ENCODE measurements at regions of chr12 and their contacts with region 1.

Region 1: GRCh38 chr12:120159509-120160237 is 34.8 kb downstream of the GCN1 start:
- DNase-seq: no peak
- ATAC-seq: no peak
- H3K4me3 ChIP-seq: no peak overlapping the region
- H3K27ac ChIP-seq: no peak overlapping the region
- H3K4me1 ChIP-seq: no peaks in the 10 kb centered on the region
- H3K27me3 ChIP-seq: no peaks in the 10 kb centered on the region
- CTCF ChIP-seq: no peak
- EP300 ChIP-seq: no peak
- POLR2A ChIP-seq: no peak
- RAD21 ChIP-seq: no peak

Region 2: GRCh38 chr12:120024193-120024592 is 135.5 kb before region 1 on chr12:
- CTCF ChIA-PET with region 1: no interaction called
- POLR2A ChIA-PET with region 1: no interaction called
- in situ Hi-C with region 1: no loop called
- intact Hi-C with region 1: no loop called
- DNase-seq: no peak
- ATAC-seq: no peak
- H3K4me3 ChIP-seq: no peak overlapping the region
- H3K27ac ChIP-seq: no peak overlapping the region
- H3K4me1 ChIP-seq: no peaks in the 10 kb centered on the region
- H3K27me3 ChIP-seq: peaks cover 4 to 7% of the 10 kb centered on the region in 2 experiments; a peak in 3 of 5 replicates
- CTCF ChIP-seq: no peak
- EP300 ChIP-seq: no peak
- POLR2A ChIP-seq: no peak
- RAD21 ChIP-seq: no peak

Region 3: DNA sequence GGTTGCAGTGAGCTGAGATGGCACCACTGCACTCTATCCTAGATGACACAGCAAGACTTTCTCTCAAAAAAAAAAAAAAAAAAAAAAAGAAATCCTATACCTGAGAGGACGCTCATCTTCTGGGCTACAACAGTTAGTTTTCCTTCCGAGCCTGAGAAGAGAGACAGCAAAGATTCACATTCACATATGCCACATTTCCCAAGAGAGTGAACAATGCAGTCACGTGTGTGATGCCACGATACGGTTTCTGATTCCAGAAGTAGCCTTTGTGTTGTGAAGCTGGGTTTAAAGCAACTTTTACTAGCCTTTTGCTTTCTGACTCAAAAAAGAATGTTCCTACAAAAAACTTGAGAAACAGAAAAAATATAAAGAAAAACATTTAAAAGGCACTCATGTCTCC is 15.4 kb after region 1 on chr12:
- CTCF ChIA-PET with region 1: no interaction called
- POLR2A ChIA-PET with region 1: interaction called, 18 read pairs
- in situ Hi-C with region 1: no loop called
- intact Hi-C with region 1: no loop called
- DNase-seq: no peak
- ATAC-seq: no peak
- H3K4me3 ChIP-seq: no peak overlapping the region
- H3K27ac ChIP-seq: no peak overlapping the region
- H3K4me1 ChIP-seq: no peaks in the 10 kb centered on the region
- H3K27me3 ChIP-seq: no peaks in the 10 kb centered on the region
- CTCF ChIP-seq: no peak
- EP300 ChIP-seq: no peak
- POLR2A ChIP-seq: no peak
- RAD21 ChIP-seq: no peak